Gastrocnemius medialis (tissue), 4 donors: ENCODE measurements at regions of chr1 and their contacts with region 1.

Region 1: DNA sequence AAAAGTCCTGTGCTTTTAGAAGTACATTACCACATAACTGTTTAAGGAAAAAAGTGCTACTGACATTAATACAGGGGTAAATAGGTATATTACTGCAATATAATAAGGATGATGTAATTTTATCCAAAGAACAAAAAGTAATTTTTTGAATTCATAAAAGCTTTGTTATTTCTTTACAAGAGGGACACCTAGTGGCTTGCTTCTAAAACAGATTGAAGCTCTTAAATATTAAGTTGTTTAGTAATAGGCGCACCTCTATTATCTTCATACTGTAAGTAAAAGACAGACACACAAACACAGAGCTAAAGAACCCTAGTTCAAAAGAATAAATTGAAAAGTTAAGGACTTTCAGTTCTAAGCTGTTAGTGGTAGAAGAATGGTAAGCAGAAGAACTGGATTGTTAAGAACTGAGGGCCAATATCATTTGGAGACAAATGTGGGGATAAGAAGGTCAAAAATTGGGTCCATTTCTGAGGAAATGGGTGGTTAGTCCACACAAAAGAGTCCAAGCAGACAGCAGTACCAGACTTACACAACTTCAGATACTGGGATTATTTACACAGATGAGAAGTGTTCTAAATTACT is 15.4 kb downstream of the ZNHIT6 start:
- DNase-seq: no peak
- ATAC-seq: no peak
- H3K4me3 ChIP-seq: no peak overlapping the region
- H3K27ac ChIP-seq: no peak overlapping the region
- H3K4me1 ChIP-seq: peaks cover 5 to 6% of the 10 kb centered on the region in 2 donors
- H3K27me3 ChIP-seq: no peaks in the 10 kb centered on the region
- CTCF ChIP-seq: peak in 4 of 5 experiments; percentile 18 to 49 (median 30)
- POLR2A ChIP-seq: no peak

Region 2: GRCh38 chr1:85494904-85495266 is 197.9 kb before region 1 on chr1:
- in situ Hi-C with region 1: no loop called
- intact Hi-C with region 1: loop called (anchors 10 kb)
- DNase-seq: no peak
- ATAC-seq: peak in 1 of 2 donors; percentile 50
- H3K4me3 ChIP-seq: no peak overlapping the region
- H3K27ac ChIP-seq: no peak overlapping the region
- H3K4me1 ChIP-seq: peaks cover 12 to 14% of the 10 kb centered on the region in 2 donors
- H3K27me3 ChIP-seq: no peaks in the 10 kb centered on the region
- CTCF ChIP-seq: peak in 3 of 5 experiments; percentile 22 to 53 (median 34)
- POLR2A ChIP-seq: no peak

Region 3: GRCh38 chr1:85612704-85613361 is 80.0 kb before region 1 on chr1:
- in situ Hi-C with region 1: no loop called
- intact Hi-C with region 1: loop called (anchors 5 kb)
- DNase-seq: no peak
- ATAC-seq: peak in 1 of 2 donors; percentile 60
- H3K4me3 ChIP-seq: no peak overlapping the region
- H3K27ac ChIP-seq: peak overlapping the region in 2 of 4 donors; percentile 53 to 54
- H3K4me1 ChIP-seq: peaks cover 11 to 13% of the 10 kb centered on the region in 2 donors
- H3K27me3 ChIP-seq: no peaks in the 10 kb centered on the region
- CTCF ChIP-seq: peak in 4 of 5 experiments; percentile 11 to 57 (median 35)
- POLR2A ChIP-seq: no peak